A673 (cell line): ENCODE measurements at regions of chr4 and their contacts with region 1.

Region 1: DNA sequence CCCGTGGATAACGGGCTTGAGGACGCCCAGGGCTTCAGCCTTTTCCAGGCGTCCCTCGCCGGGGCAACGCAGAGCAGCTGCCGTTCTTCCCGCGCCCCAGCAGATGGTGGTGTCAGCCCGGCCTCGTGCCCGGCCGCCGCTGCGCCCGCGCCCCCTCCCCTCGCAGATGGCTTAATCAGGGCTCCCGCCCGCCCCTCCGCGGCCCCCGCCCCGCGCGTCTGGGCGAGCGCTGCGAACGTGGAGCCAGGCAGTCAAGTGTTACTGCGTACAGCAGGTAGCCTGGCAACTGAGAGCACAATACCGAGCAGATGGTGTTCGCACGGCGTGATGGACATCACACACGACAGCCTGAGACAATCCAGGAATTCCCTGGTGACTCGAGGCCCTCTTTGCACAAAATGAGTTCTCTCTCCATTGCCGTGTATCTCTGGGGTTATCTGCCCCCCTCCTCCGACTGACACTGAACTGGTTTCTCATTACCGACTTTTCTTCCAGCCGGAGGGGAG is 69.3 kb downstream of the MGST2 start:
- DNase-seq: peak; percentile 84
- H3K4me3 ChIP-seq: peak overlapping the region; percentile 41
- H3K27ac ChIP-seq: peak overlapping the region; percentile 2
- H3K4me1 ChIP-seq: peaks cover 13% of the 10 kb centered on the region
- H3K27me3 ChIP-seq: no peaks in the 10 kb centered on the region
- CTCF ChIP-seq: peak; percentile 75

Region 2: DNA sequence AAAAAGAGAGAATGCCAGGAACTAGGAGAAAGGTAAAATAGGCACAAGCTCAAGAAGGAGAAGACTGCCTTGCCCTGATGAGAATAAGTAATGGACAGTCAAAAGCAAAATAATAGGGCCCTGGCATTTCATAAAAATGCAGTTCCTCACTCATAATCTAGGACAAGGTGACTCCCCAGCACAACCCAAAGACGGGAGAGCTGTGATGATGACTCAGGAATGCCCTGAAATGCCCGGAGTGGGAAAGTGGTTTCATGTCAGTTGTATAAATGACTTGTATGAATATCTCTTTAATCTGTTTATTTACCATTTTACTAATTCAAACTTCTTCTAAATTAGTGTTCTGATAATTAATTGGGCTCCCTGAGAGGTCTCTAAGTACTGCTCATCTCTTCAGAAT is 150.1 kb before region 1 on chr4:
- CTCF ChIA-PET with region 1: no interaction called
- POLR2A ChIA-PET with region 1: interaction called, 13 read pairs
- intact Hi-C with region 1: no loop called
- DNase-seq: no peak
- H3K4me3 ChIP-seq: no peak overlapping the region
- H3K27ac ChIP-seq: no peak overlapping the region
- H3K4me1 ChIP-seq: no peaks in the 10 kb centered on the region
- H3K27me3 ChIP-seq: no peaks in the 10 kb centered on the region
- CTCF ChIP-seq: no peak

Region 3: GRCh38 chr4:139969635-139970266 is 234.8 kb after region 1 on chr4:
- CTCF ChIA-PET with region 1: no interaction called
- POLR2A ChIA-PET with region 1: no interaction called
- intact Hi-C with region 1: no loop called
- DNase-seq: no peak
- H3K4me3 ChIP-seq: no peak overlapping the region
- H3K27ac ChIP-seq: no peak overlapping the region
- H3K4me1 ChIP-seq: no peaks in the 10 kb centered on the region
- H3K27me3 ChIP-seq: no peaks in the 10 kb centered on the region
- CTCF ChIP-seq: no peak

Region 4: GRCh38 chr4:140012688-140013486 is 278.0 kb after region 1 on chr4:
- CTCF ChIA-PET with region 1: interaction called, 6 read pairs
- POLR2A ChIA-PET with region 1: no interaction called
- intact Hi-C with region 1: loop called (anchors 5 kb)
- DNase-seq: peak; percentile 70
- H3K4me3 ChIP-seq: no peak overlapping the region
- H3K27ac ChIP-seq: no peak overlapping the region
- H3K4me1 ChIP-seq: no peaks in the 10 kb centered on the region
- H3K27me3 ChIP-seq: no peaks in the 10 kb centered on the region
- CTCF ChIP-seq: peak; percentile 77

Region 5: GRCh38 chr4:140153718-140154571 is 419.0 kb after region 1 on chr4 and contains the start of gene MAML3:
- CTCF ChIA-PET with region 1: no interaction called
- POLR2A ChIA-PET with region 1: no interaction called
- intact Hi-C with region 1: loop called (anchors 2 kb)
- DNase-seq: peak; percentile 98
- H3K4me3 ChIP-seq: peak within 1 kb of the TSS; percentile 64
- H3K27ac ChIP-seq: peak within 1 kb of the TSS; percentile 66
- H3K4me1 ChIP-seq: peaks cover 6% of the 10 kb centered on the region
- H3K27me3 ChIP-seq: no peaks in the 10 kb centered on the region
- CTCF ChIP-seq: no peak
- total RNA-seq, gene MAML3: 3.7 and 4.3 TPM in 2 replicates

Region 6: DNA sequence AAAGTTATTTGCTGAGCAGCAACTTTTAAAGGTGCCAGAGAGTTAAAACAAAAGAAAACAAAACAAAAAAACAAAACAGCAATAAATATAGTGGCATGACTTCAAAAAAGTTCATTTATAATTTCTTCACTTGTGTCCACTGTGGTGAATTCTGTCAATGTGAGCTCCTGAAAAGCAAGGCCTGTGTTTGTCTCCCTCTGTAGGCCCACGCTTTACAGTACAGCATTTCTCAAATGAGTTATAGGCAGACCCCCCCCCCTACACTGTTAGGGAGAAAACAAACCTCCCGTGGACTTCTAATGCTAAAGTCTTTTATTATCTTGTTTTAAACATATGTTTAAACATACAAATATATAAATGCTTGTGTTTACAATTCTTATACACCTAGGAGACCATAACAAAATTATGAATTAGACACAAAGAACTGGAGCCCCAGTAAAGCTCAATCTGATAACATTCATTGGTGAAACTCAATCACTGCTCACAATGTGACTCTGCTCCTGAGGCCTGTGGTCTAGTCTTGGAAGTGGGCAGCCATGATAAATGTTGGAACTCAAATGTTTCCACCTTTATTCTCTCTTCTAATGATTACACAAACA is 591.6 kb after region 1 on chr4:
- CTCF ChIA-PET with region 1: interaction called, 4 read pairs
- POLR2A ChIA-PET with region 1: no interaction called
- intact Hi-C with region 1: loop called (anchors 10 kb)
- DNase-seq: peak; percentile 41
- H3K4me3 ChIP-seq: no peak overlapping the region
- H3K27ac ChIP-seq: no peak overlapping the region
- H3K4me1 ChIP-seq: no peaks in the 10 kb centered on the region
- H3K27me3 ChIP-seq: no peaks in the 10 kb centered on the region
- CTCF ChIP-seq: peak; percentile 70